ENCODE measurements at regions of chr10 and their contacts with region 1.

Region 1: GRCh38 chr10:99532687-99533495 is at the start of gene NKX2-3:
- DNase-seq: peak; percentile 93

Region 2: DNA sequence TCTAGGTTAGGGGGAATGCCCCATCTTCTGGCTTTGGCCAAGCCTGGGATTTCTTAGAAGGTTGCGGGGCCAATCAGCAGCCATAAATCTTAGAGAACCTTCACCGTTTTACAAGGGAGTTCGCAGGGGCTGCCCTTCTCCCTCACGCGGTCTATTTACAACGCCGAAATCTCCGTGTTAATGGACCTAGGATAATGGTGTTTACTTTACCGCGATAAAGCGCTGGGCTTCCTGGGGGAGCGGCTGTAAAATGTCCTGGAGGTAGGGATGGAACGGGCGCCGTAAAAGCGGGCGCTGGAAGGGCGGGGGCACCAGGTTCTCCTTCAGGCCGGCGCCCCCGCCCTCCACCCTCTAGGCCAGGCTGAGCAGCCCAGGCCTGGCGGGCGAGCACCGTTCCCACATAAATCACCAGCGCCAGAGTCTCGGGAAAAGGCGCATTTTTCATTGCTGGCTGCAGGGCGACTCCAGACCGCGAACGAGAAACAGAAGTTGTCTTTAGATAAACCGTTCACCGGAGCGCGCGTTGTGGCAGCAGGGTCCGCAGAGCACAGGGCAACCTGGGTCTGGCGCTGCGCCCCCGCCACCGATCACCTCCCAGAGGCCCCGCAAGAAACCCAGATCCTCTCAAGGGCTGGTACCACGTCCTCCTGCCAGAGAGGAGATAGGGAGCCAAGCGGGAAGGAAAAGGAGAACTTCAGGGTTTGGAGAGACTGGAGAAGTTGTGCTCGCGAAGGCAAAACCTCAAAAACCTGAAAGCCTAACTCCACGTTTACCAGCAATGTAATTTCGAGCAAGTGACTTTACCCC is 12.6 kb before region 1 on chr10:
- CTCF ChIA-PET with region 1: no interaction called
- POLR2A ChIA-PET with region 1: interaction called, 21 read pairs
- DNase-seq: peak; percentile 81